GM18951 (cell line): ENCODE measurements at regions of chr7 and their contacts with region 1.

Region 1: DNA sequence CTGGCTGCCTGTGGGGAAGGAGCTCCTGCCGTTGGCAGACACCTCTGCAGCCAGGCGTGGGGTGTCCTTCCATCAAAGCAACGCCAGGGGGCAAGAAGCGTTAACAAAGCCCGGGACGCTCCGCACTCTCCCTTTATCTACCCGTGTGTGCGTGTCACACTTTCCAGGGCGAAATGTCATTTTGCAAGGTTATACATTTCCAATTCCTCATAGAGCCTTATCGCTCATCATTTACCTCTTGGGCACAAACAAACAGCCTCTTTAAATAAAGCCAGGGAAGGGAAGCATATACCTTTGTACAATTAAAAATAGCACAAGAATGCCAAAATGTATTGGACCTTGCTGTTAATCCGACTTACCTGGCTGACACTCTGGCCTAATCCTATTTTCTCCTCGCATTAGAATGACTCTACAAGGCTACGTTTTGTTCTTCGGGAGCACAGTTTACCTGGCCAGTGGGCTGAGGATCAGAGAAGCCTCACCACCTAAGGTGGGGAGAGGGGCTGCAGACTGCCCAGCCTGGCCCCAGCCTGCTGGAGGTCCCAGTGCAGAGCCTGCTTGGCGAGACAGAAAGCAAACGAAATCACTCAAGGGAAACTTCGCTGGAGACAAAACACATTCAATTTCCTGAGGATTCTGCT is 77.6 kb upstream of the EN2 start:
- POLR2A ChIP-seq: no peak

Region 2: DNA sequence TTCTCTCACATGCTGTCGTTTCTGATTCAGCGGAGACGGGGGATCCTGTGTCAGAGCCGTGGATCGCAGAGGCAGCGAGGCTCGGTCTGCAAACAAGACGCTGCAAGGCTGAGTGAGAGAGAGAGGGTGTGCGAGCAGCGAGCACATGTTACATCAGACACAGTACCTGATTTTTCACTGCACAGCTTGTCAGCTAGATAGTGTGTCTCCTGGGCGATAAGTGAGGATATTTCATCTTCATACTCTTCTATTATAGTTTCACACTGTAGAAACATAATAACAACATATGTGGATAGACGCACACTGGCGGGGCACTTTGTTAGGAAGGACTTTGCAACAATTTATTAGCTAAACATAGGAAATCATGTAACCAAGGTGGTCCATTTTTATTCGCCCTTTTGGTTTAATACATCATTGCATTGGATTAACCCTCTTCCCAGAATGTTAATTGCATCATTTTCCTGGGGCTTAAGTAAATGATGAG is 126.6 kb after region 1 on chr7:
- in situ Hi-C with region 1: loop called (anchors 25 kb)
- POLR2A ChIP-seq: no peak

Region 3: GRCh38 chr7:155555116-155555695 is 174.9 kb after region 1 on chr7:
- in situ Hi-C with region 1: no loop called
- POLR2A ChIP-seq: no peak

Region 4: DNA sequence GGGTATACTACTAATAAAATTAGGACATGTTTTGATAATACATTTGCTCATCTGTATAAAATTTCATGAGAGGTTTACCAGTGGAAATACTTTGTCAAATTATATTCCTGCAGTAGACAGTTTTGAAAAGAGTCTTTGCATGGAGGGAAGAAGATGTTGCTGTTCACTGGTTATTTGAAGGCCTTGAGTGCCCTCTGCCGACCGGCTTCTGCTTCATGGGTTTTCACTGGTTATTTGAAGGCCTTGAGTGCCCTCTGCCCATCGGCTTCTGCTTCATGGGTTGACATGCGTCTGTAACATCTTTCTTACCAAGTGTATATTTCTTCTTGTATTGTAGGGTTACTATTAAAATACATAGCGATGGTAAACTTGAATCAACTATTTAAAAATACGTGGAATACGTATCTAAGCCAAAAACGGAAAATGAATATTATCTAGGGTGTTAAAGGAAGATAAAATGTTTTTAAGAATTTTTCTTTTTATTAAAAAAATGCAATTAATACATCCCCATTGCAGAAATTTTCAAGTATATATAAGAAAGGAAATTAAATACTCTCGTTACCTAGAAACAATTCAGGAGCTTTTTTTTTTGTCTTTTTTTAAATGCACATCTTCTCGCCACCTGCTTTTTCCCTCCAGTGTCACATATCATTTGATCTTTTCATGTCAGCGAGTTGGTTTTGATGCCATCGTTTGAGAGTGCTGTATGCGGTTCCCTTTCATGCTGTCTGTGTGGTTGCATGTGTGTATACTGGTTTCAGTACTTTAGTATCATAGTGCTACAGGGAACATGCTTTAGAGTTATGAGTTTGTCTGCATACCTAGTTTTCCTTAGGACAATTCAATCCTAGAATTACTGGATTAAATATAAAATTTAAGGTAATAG is 358.6 kb after region 1 on chr7:
- in situ Hi-C with region 1: loop called (anchors 25 kb)
- POLR2A ChIP-seq: no peak